CD4-positive, alpha-beta memory T cell (primary cell): ENCODE measurements at regions of chr22 and their contacts with region 1.

Region 1: GRCh38 chr22:50326959-50327710 is at the start of gene DENND6B:
- DNase-seq: peak; percentile 51 to 73 (median 60)
- H3K4me3 ChIP-seq: peak within 1 kb of the TSS; percentile 2 to 55
- H3K4me3 Mint-ChIP-seq: peak within 1 kb of the TSS; percentile 77 to 87 (median 86)
- H3K27ac ChIP-seq: peak within 1 kb of the TSS; percentile 51
- H3K27ac Mint-ChIP-seq: peak within 1 kb of the TSS; percentile 41 to 82 (median 66)
- H3K4me1 ChIP-seq: peaks cover 9% of the 10 kb centered on the region
- H3K4me1 Mint-ChIP-seq: peaks cover 5 to 14% (median 9%) of the 10 kb centered on the region in 4 donors
- H3K27me3 ChIP-seq: no peaks in the 10 kb centered on the region
- H3K27me3 Mint-ChIP-seq: peaks cover 0 to 4% of the 10 kb centered on the region in 2 donors
- total RNA-seq, gene DENND6B: 1.5 to 2.4 TPM

Region 2: GRCh38 chr22:50148991-50149721 is 178.0 kb before region 1 on chr22:
- CTCF ChIA-PET with region 1: interaction called, 4 read pairs
- POLR2A ChIA-PET with region 1: no interaction called
- intact Hi-C with region 1: loop called (anchors 1 kb)
- DNase-seq: peak; percentile 69 to 76 (median 75)
- H3K4me3 ChIP-seq: no peak overlapping the region
- H3K4me3 Mint-ChIP-seq: no peak overlapping the region
- H3K27ac ChIP-seq: no peak overlapping the region
- H3K27ac Mint-ChIP-seq: peak overlapping the region in 1 of 7 donors; percentile 7
- H3K4me1 ChIP-seq: no peaks in the 10 kb centered on the region
- H3K4me1 Mint-ChIP-seq: peaks cover 0 to 4% (median under 1%) of the 10 kb centered on the region in 4 donors
- H3K27me3 ChIP-seq: no peaks in the 10 kb centered on the region
- H3K27me3 Mint-ChIP-seq: peaks cover 2 to 3% of the 10 kb centered on the region in 2 donors

Region 3: GRCh38 chr22:50244420-50245213 is 82.5 kb before region 1 on chr22 and contains the start of gene TUBGCP6:
- CTCF ChIA-PET with region 1: interaction called, 7 read pairs
- POLR2A ChIA-PET with region 1: interaction called, 9 read pairs
- intact Hi-C with region 1: loop called (anchors 1 kb)
- DNase-seq: peak; percentile 89 to 93 (median 91)
- H3K4me3 ChIP-seq: peak within 1 kb of the TSS; percentile 37 to 99
- H3K4me3 Mint-ChIP-seq: peak within 1 kb of the TSS; percentile 95 to 100 (median 98)
- H3K27ac ChIP-seq: peak within 1 kb of the TSS; percentile 98
- H3K27ac Mint-ChIP-seq: peak within 1 kb of the TSS; percentile 90 to 100 (median 99)
- H3K4me1 ChIP-seq: peaks cover 69% of the 10 kb centered on the region
- H3K4me1 Mint-ChIP-seq: peaks cover 23 to 64% (median 37%) of the 10 kb centered on the region in 4 donors
- H3K27me3 ChIP-seq: no peaks in the 10 kb centered on the region
- H3K27me3 Mint-ChIP-seq: no peaks in the 10 kb centered on the region
- total RNA-seq, gene TUBGCP6: 132 to 133 TPM

Region 4: GRCh38 chr22:50250555-50251476 is 76.3 kb before region 1 on chr22 and contains the start of gene HDAC10:
- CTCF ChIA-PET with region 1: interaction called, 22 read pairs
- POLR2A ChIA-PET with region 1: interaction called, 6 read pairs
- intact Hi-C with region 1: loop called (anchors 1 kb)
- DNase-seq: peak; percentile 71 to 78 (median 74)
- H3K4me3 ChIP-seq: peak within 1 kb of the TSS; percentile 36 to 89
- H3K4me3 Mint-ChIP-seq: peak within 1 kb of the TSS; percentile 73 to 84 (median 78)
- H3K27ac ChIP-seq: peak within 1 kb of the TSS; percentile 66
- H3K27ac Mint-ChIP-seq: peak within 1 kb of the TSS in 6 of 7 donors; percentile 50 to 88 (median 64)
- H3K4me1 ChIP-seq: peaks cover 44% of the 10 kb centered on the region
- H3K4me1 Mint-ChIP-seq: peaks cover 7 to 29% (median 17%) of the 10 kb centered on the region in 4 donors
- H3K27me3 ChIP-seq: no peaks in the 10 kb centered on the region
- H3K27me3 Mint-ChIP-seq: peaks cover 1 to 2% of the 10 kb centered on the region in 2 donors
- total RNA-seq, gene HDAC10: 141 to 151 TPM

Region 5: GRCh38 chr22:50276143-50276542 is 51.0 kb before region 1 on chr22:
- CTCF ChIA-PET with region 1: interaction called, 17 read pairs
- POLR2A ChIA-PET with region 1: interaction called, 4 read pairs
- intact Hi-C with region 1: loop called (anchors 1 kb)
- DNase-seq: peak in 3 of 5 donors; percentile 24 to 58 (median 52)
- H3K4me3 ChIP-seq: no peak overlapping the region
- H3K4me3 Mint-ChIP-seq: no peak overlapping the region
- H3K27ac ChIP-seq: no peak overlapping the region
- H3K27ac Mint-ChIP-seq: peak overlapping the region in 1 of 7 donors; percentile 66
- H3K4me1 ChIP-seq: peaks cover 6% of the 10 kb centered on the region
- H3K4me1 Mint-ChIP-seq: peaks cover 0 to 8% (median 3%) of the 10 kb centered on the region in 4 donors
- H3K27me3 ChIP-seq: no peaks in the 10 kb centered on the region
- H3K27me3 Mint-ChIP-seq: no peaks in the 10 kb centered on the region

Region 6: DNA sequence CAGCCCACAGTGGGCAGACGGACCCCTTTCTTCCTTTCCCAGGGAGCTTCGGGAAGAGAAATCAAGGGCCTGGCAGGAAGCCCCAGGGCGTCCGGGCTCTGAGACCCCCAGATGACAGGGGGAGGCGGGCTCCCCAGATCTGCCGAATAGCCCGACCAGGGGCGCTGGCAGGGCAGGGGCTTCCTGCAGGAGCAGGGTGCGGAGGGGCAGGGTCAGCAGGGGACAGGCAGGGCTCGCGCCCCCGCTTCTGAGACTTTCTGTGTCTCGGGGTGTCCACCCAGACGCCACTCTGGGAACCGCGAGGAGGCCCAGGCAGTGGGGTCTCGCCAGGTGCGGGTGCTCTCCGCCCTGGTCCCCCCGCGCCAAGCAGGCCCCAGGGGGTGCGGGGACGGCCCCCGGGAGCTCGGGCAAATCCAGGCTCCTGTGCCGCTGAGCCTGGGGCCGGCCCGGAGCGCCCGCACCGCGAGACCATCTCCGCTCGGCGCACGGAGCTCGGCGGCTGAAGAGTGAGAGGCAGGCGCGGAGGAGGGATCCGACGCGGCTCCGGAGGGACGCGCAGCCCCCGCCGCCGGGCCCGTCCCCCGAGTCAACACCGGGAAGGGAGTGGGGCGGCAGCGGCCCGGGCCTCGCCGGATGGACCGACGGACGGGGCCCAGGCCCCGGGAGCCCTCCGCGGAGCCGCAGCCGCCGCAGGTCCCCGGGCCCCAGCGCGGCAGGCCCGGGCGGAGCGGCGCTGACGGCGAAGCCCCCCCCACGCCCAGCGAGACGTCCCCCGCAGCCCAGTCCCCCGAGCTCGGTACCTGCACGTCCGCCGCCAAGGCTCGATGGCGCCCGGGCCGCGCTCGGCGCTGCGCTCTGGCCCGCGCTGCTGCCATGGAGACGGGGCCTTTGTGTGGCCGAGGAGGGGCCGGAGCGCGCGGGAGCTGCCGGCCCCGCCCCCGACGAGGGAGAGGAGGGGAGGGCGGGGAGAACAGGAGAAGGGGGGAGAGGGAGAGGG is 20.1 kb before region 1 on chr22 and contains the start of gene PLXNB2:
- CTCF ChIA-PET with region 1: no interaction called
- POLR2A ChIA-PET with region 1: no interaction called
- intact Hi-C with region 1: loop called (anchors 2 kb)
- DNase-seq: peak in 2 of 5 donors; percentile 10 to 20
- H3K4me3 ChIP-seq: no peak within 1 kb of the TSS
- H3K4me3 Mint-ChIP-seq: peak within 1 kb of the TSS in 3 of 8 donors; percentile 17 to 39 (median 31)
- H3K27ac ChIP-seq: no peak within 1 kb of the TSS
- H3K27ac Mint-ChIP-seq: no peak within 1 kb of the TSS
- H3K4me1 ChIP-seq: peaks cover 5% of the 10 kb centered on the region
- H3K4me1 Mint-ChIP-seq: peaks cover 2 to 15% (median 4%) of the 10 kb centered on the region in 4 donors
- H3K27me3 ChIP-seq: no peaks in the 10 kb centered on the region
- H3K27me3 Mint-ChIP-seq: peaks cover 8 to 10% of the 10 kb centered on the region in 2 donors
- total RNA-seq, gene PLXNB2: 2.8 to 4.6 TPM

Region 7: GRCh38 chr22:50314455-50315288 is 12.5 kb before region 1 on chr22:
- CTCF ChIA-PET with region 1: interaction called, 15 read pairs
- POLR2A ChIA-PET with region 1: interaction called, 9 read pairs
- intact Hi-C with region 1: no loop called
- DNase-seq: peak; percentile 54 to 72 (median 60)
- H3K4me3 ChIP-seq: peak overlapping the region; percentile 28 to 36
- H3K4me3 Mint-ChIP-seq: peak overlapping the region; percentile 81 to 96 (median 87)
- H3K27ac ChIP-seq: peak overlapping the region; percentile 30
- H3K27ac Mint-ChIP-seq: peak overlapping the region; percentile 40 to 97 (median 91)
- H3K4me1 ChIP-seq: peaks cover 19% of the 10 kb centered on the region
- H3K4me1 Mint-ChIP-seq: peaks cover 6 to 18% (median 12%) of the 10 kb centered on the region in 4 donors
- H3K27me3 ChIP-seq: no peaks in the 10 kb centered on the region
- H3K27me3 Mint-ChIP-seq: no peaks in the 10 kb centered on the region